PC-3 (cell line): ENCODE measurements at regions of chr12 and their contacts with region 1.

Region 1: DNA sequence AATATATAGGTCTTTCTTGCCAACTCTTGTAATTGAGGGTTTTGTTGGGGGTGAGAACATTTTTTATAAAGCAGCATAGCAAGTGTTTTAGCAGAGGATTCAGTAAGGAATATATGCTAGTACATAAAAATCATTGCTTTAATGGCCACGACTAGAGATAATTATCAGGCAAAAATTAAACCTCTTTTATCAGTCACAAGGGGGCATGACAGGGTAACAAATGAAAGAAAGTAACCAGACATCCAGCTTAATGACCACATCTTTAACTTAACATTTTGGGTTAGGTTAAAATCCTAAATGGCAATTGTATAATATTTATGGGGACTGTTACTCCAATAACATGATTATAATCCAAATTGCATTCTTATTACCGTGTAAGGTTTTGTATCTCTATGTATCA is 119.6 kb downstream of the LRRIQ1 start:
- DNase-seq: peak; percentile 46
- ATAC-seq: peak; percentile 77
- H3K4me3 ChIP-seq: no peak overlapping the region
- H3K27ac ChIP-seq: no peak overlapping the region
- H3K4me1 ChIP-seq: no peaks in the 10 kb centered on the region
- H3K27me3 ChIP-seq: no peaks in the 10 kb centered on the region
- CTCF ChIP-seq: peak; percentile 63

Region 2: DNA sequence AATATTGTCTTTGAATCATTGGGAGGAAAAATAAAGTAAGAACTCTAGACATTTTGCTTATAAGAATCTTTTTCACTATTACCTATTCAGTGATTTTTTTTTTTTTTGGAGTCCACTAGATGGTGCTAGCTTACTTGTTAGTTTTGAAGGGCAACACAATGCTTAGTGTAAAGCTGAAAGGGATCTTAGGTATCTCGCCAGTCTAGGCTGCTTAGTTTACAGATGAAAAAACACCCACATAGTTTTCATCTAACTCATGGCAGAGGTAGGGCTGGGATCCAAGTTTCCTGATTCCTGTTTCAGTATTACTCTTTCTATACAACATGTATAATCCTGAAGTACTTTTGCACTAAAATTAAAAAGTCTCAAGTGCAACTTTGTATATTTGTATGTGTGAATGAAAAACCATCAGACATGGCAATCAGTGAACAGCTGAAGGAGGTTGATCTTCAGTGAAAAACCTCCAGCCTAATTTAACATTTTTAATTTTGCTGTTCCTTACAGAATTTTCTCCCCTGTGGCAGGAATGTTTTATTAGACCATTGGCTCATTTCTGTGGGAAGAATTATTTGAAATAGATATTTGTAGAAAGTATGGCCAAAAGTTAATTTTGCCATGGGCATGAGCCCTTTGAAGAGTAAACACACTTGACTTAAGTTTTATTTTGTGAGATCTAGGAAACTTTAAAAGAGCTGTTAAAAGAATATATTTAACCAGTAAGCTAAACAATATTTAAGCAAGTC is 78.9 kb before region 1 on chr12:
- CTCF ChIA-PET with region 1: interaction called, 6 read pairs
- POLR2A ChIA-PET with region 1: no interaction called
- intact Hi-C with region 1: loop called (anchors 1 kb)
- DNase-seq: peak; percentile 93
- ATAC-seq: peak; percentile 100
- H3K4me3 ChIP-seq: peak overlapping the region; percentile 8; the same call in 1 of the 2 replicates
- H3K27ac ChIP-seq: peak overlapping the region; percentile 17; the same call in 1 of the 2 replicates
- H3K4me1 ChIP-seq: peaks cover 9% of the 10 kb centered on the region
- H3K27me3 ChIP-seq: no peaks in the 10 kb centered on the region
- CTCF ChIP-seq: peak; percentile 77

Region 3: GRCh38 chr12:85225501-85225900 is 69.7 kb after region 1 on chr12:
- CTCF ChIA-PET with region 1: no interaction called
- POLR2A ChIA-PET with region 1: no interaction called
- intact Hi-C with region 1: no loop called
- DNase-seq: no peak
- ATAC-seq: no peak
- H3K4me3 ChIP-seq: no peak overlapping the region
- H3K27ac ChIP-seq: no peak overlapping the region
- H3K4me1 ChIP-seq: no peaks in the 10 kb centered on the region
- H3K27me3 ChIP-seq: no peaks in the 10 kb centered on the region
- CTCF ChIP-seq: no peak

Region 4: DNA sequence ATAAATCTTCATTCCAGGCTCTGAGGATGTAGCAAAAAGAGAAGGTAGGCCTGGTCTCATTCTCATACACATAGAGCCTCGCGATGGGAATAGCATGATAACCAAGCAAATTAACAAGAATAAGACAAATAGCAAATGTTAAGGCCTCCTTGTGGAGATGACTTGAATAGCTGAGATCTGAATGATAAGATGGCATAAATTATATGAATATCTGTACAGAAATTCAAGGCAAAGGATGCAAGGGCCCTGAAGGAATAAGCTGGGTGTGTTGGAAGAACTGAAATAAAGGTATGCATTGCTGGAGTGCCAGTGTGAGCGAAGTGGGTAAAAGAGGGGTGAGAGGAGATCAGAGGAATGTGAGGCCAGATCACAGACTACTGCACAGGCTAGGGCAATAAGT is 239.0 kb after region 1 on chr12:
- CTCF ChIA-PET with region 1: no interaction called
- POLR2A ChIA-PET with region 1: no interaction called
- intact Hi-C with region 1: loop called (anchors 1 kb)
- DNase-seq: peak; percentile 37
- ATAC-seq: peak; percentile 29; the same call in 1 of the 2 replicates
- H3K4me3 ChIP-seq: no peak overlapping the region
- H3K27ac ChIP-seq: no peak overlapping the region
- H3K4me1 ChIP-seq: no peaks in the 10 kb centered on the region
- H3K27me3 ChIP-seq: no peaks in the 10 kb centered on the region
- CTCF ChIP-seq: peak; percentile 48

Region 5: DNA sequence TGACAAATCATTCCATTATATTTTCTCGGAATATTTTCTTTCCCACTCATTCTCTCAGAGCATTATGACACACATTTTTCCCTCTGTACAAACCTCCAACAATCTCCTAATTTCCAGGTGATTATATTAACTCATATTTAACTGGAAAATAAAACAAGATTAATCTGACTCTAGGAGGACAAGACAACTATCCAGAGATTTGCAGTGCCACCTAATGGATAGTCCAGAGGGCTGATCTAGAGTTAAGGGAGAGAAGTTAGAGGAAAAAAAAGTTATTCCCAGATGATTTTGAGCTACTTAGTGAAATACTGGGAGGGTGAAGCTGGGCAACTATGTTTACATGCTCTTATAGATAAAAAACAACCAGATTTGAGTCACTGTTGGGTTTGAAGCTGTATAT is 286.0 kb after region 1 on chr12:
- CTCF ChIA-PET with region 1: interaction called, 4 read pairs
- POLR2A ChIA-PET with region 1: no interaction called
- intact Hi-C with region 1: loop called (anchors 2 kb)
- DNase-seq: peak; percentile 33
- ATAC-seq: peak; percentile 78
- H3K4me3 ChIP-seq: no peak overlapping the region
- H3K27ac ChIP-seq: no peak overlapping the region
- H3K4me1 ChIP-seq: no peaks in the 10 kb centered on the region
- H3K27me3 ChIP-seq: no peaks in the 10 kb centered on the region
- CTCF ChIP-seq: peak; percentile 71

Region 6: GRCh38 chr12:85626001-85626781 is 470.4 kb after region 1 on chr12:
- CTCF ChIA-PET with region 1: no interaction called
- POLR2A ChIA-PET with region 1: no interaction called
- intact Hi-C with region 1: no loop called
- DNase-seq: peak; percentile 82
- ATAC-seq: peak; percentile 79
- H3K4me3 ChIP-seq: no peak overlapping the region; the same call in 1 of the 2 replicates
- H3K27ac ChIP-seq: peak overlapping the region; percentile 85
- H3K4me1 ChIP-seq: peaks cover 72% of the 10 kb centered on the region
- H3K27me3 ChIP-seq: no peaks in the 10 kb centered on the region
- CTCF ChIP-seq: no peak

Region 7: GRCh38 chr12:85920324-85920947 is 764.6 kb after region 1 on chr12:
- CTCF ChIA-PET with region 1: no interaction called
- POLR2A ChIA-PET with region 1: no interaction called
- intact Hi-C with region 1: loop called (anchors 1 kb)
- DNase-seq: peak; percentile 78
- ATAC-seq: peak; percentile 55; the same call in 1 of the 2 replicates
- H3K4me3 ChIP-seq: no peak overlapping the region
- H3K27ac ChIP-seq: no peak overlapping the region
- H3K4me1 ChIP-seq: no peaks in the 10 kb centered on the region
- H3K27me3 ChIP-seq: no peaks in the 10 kb centered on the region
- CTCF ChIP-seq: peak; percentile 75